Gastrocnemius medialis (tissue), 4 donors: ENCODE measurements at regions of chr20 and their contacts with region 1.

Region 1: GRCh38 chr20:22984606-22985005 is 50.5 kb upstream of the SSTR4 start:
- DNase-seq: no peak
- ATAC-seq: no peak
- H3K4me3 ChIP-seq: no peak overlapping the region
- H3K27ac ChIP-seq: no peak overlapping the region
- H3K4me1 ChIP-seq: peaks cover 0 to 3% of the 10 kb centered on the region in 2 donors
- H3K27me3 ChIP-seq: no peaks in the 10 kb centered on the region
- CTCF ChIP-seq: no peak
- POLR2A ChIP-seq: no peak

Region 2: GRCh38 chr20:22312744-22313346 is 671.8 kb before region 1 on chr20:
- in situ Hi-C with region 1: loop called in 1 of 4 experiments (anchors 25 kb)
- intact Hi-C with region 1: no loop called
- DNase-seq: no peak
- ATAC-seq: no peak
- H3K4me3 ChIP-seq: no peak overlapping the region
- H3K27ac ChIP-seq: no peak overlapping the region
- H3K4me1 ChIP-seq: no peaks in the 10 kb centered on the region
- H3K27me3 ChIP-seq: no peaks in the 10 kb centered on the region
- CTCF ChIP-seq: peak in 3 of 5 experiments; percentile 3 to 48 (median 39)
- POLR2A ChIP-seq: no peak

Region 3: GRCh38 chr20:22567944-22568871 is 416.4 kb before region 1 on chr20:
- in situ Hi-C with region 1: no loop called
- intact Hi-C with region 1: no loop called
- DNase-seq: no peak
- ATAC-seq: no peak
- H3K4me3 ChIP-seq: peak overlapping the region in 1 of 4 donors; percentile 40
- H3K27ac ChIP-seq: no peak overlapping the region
- H3K4me1 ChIP-seq: peaks cover 0 to 10% of the 10 kb centered on the region in 2 donors
- H3K27me3 ChIP-seq: peaks cover 81 to 99% (median 93%) of the 10 kb centered on the region in 3 donors
- CTCF ChIP-seq: no peak
- POLR2A ChIP-seq: no peak